CD4-positive, alpha-beta T cell (primary cell): ENCODE measurements at regions of chr11 and their contacts with region 1.

Region 1: DNA sequence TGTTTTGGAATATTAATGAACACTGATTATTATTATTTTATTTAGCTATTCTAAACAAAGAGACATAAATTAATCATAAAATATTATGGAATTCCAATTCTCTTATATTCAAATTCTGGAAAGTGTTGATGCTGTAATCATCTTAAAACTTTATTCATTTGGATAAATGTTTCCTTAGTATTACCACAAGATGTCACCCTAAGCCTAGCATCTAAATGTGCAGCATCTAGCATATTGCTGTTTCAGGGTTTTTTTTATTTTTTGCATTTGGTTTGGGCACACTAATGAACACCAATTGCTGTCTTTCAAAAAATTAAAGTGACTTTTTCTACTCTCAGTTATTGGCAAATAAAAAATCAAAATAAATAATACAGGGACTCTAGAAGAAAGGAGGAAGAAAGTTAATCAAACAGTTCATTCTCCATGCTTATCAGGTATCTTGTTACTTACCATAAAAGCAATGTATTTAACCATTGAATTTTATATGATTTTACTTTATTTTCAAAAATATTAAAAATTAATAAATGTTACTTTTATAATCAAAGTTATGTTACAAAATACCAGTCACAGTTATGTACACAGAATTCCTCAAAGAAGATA is 31.8 kb downstream of the DLG2 start:
- DNase-seq: peak in 3 of 14 experiments; percentile 64 to 73 (median 72)
- ATAC-seq: peak; percentile 60
- H3K4me3 ChIP-seq: no peak overlapping the region
- H3K4me3 Mint-ChIP-seq: no peak overlapping the region
- H3K27ac ChIP-seq: no peak overlapping the region
- H3K27ac Mint-ChIP-seq: no peak overlapping the region
- H3K4me1 ChIP-seq: no peaks in the 10 kb centered on the region
- H3K4me1 Mint-ChIP-seq: no peaks in the 10 kb centered on the region
- H3K27me3 ChIP-seq: no peaks in the 10 kb centered on the region
- H3K27me3 Mint-ChIP-seq: no peaks in the 10 kb centered on the region
- CTCF ChIP-seq: peak; percentile 86

Region 2: DNA sequence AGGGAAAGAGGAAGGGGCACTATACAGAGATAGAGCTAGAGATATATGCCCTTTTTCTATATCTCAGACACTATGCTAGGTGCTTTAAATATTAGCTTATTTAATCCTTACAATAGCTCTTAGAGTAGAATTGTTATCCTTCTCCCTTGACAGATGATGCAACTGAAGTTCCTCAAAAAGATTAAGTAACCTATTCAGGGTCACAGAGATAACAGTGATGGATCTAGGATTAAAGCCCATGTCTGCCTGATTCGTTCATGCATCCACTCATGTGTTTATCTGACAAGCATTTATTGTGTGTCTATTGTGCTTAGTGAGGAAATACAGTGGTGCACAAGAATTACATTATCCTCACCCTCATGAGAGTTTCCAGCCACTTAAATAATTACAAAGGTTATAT is 268.5 kb after region 1 on chr11:
- CTCF ChIA-PET with region 1: no interaction called
- POLR2A ChIA-PET with region 1: no interaction called
- intact Hi-C with region 1: loop called (anchors 2 to 5 kb)
- DNase-seq: no peak
- ATAC-seq: no peak
- H3K4me3 ChIP-seq: no peak overlapping the region
- H3K4me3 Mint-ChIP-seq: no peak overlapping the region
- H3K27ac ChIP-seq: no peak overlapping the region
- H3K27ac Mint-ChIP-seq: no peak overlapping the region
- H3K4me1 ChIP-seq: no peaks in the 10 kb centered on the region
- H3K4me1 Mint-ChIP-seq: no peaks in the 10 kb centered on the region
- H3K27me3 ChIP-seq: no peaks in the 10 kb centered on the region
- H3K27me3 Mint-ChIP-seq: no peaks in the 10 kb centered on the region
- CTCF ChIP-seq: no peak

Region 3: GRCh38 chr11:86021377-86021776 is 426.0 kb after region 1 on chr11:
- CTCF ChIA-PET with region 1: no interaction called
- POLR2A ChIA-PET with region 1: no interaction called
- intact Hi-C with region 1: loop called in 1 of 2 experiments (anchors 10 kb)
- DNase-seq: peak in 3 of 14 experiments; percentile 13 to 26 (median 20)
- ATAC-seq: no peak
- H3K4me3 ChIP-seq: no peak overlapping the region
- H3K4me3 Mint-ChIP-seq: no peak overlapping the region
- H3K27ac ChIP-seq: no peak overlapping the region
- H3K27ac Mint-ChIP-seq: no peak overlapping the region
- H3K4me1 ChIP-seq: no peaks in the 10 kb centered on the region
- H3K4me1 Mint-ChIP-seq: peaks cover 37% of the 10 kb centered on the region
- H3K27me3 ChIP-seq: no peaks in the 10 kb centered on the region
- H3K27me3 Mint-ChIP-seq: no peaks in the 10 kb centered on the region
- CTCF ChIP-seq: no peak

Region 4: GRCh38 chr11:86291466-86292262 is 696.3 kb after region 1 on chr11:
- CTCF ChIA-PET with region 1: no interaction called
- POLR2A ChIA-PET with region 1: no interaction called
- intact Hi-C with region 1: loop called (anchors 1 to 2 kb)
- DNase-seq: peak; percentile 41 to 80 (median 54)
- ATAC-seq: peak; percentile 64
- H3K4me3 ChIP-seq: no peak overlapping the region
- H3K4me3 Mint-ChIP-seq: no peak overlapping the region
- H3K27ac ChIP-seq: no peak overlapping the region
- H3K27ac Mint-ChIP-seq: no peak overlapping the region
- H3K4me1 ChIP-seq: peaks cover 32% of the 10 kb centered on the region
- H3K4me1 Mint-ChIP-seq: peaks cover 29% of the 10 kb centered on the region
- H3K27me3 ChIP-seq: no peaks in the 10 kb centered on the region
- H3K27me3 Mint-ChIP-seq: no peaks in the 10 kb centered on the region
- CTCF ChIP-seq: peak; percentile 62

Region 5: DNA sequence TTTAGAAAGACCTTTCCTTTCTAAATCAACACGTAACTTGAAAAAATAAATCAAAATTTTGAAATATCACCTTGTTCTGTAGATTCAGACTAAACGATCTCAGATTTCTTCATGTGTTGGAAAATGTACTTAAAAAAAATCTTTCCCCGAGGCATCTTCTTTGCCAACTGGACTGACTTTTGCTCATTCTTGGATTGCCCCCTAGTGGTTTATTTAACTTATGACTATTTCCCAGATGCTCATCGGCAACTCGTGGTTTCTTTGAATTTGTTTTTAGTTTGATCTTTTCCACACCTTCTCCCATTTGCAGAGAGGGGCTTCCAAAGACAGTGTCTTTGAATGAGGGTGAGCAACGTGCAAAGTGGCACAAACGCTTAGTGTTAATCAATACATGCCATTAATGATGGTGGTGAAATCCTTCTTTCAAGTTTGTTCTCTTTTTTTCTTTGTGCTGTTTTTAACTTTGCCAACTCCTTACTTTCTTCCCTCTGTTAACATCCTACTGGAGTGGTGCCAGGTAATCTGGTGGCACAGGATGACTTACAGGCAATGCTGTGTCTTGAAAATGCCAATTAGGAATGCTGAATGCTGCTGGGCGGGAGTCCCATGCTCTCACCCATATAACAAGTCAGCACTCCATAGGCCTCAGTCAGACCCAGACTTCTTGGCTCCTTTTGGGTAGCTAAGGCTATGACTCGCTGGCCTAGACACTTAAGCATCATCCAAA is 1223.2 kb after region 1 on chr11:
- CTCF ChIA-PET with region 1: no interaction called
- POLR2A ChIA-PET with region 1: no interaction called
- intact Hi-C with region 1: loop called in 1 of 2 experiments (anchors 2 kb)
- DNase-seq: peak in 3 of 14 experiments; percentile 58 to 64 (median 63)
- ATAC-seq: no peak
- H3K4me3 ChIP-seq: no peak overlapping the region
- H3K4me3 Mint-ChIP-seq: no peak overlapping the region
- H3K27ac ChIP-seq: no peak overlapping the region
- H3K27ac Mint-ChIP-seq: no peak overlapping the region
- H3K4me1 ChIP-seq: no peaks in the 10 kb centered on the region
- H3K4me1 Mint-ChIP-seq: peaks cover 5% of the 10 kb centered on the region
- H3K27me3 ChIP-seq: peaks cover 0 to 5% of the 10 kb centered on the region in 2 experiments
- H3K27me3 Mint-ChIP-seq: peaks cover 7% of the 10 kb centered on the region
- CTCF ChIP-seq: peak; percentile 79